ENCODE measurements at regions of chr4 and their contacts with region 1.

Region 1: DNA sequence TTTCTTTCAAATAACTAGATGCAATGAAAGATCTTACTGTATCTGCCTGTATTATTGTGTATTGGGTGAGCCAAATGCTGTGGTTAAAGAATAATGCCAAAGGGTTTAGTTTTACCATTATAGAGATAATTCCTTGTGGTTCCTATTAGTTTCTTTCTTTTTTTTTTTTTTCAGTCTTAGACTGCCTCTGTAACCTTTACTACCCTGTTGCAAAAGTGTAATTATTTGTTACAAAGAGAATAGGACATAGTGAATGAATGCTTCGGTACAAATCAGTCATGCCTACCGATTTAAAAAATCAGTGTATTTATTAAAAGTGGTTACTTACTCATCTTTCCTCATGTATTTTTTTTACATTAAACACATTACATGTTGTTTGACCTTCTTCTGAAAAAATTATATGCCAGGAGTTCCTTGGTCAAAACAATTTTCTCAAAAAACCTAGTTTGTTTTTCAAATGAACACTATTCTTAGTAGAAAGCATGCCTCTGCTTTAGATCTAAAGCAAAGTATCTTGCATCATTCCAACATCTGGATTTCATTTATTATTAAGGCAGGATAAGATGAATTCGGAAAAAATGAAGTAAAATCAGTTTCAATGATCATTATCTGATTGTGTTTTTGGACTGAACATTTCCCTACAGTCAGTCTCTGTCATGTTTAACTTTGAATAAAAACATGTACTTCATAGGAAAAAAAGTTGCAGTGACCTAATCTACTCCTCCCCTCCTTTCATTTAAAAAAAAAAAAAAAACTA is 21.2 kb upstream of the SYNPO2 start:
- DNase-seq: no peak
- ATAC-seq: no peak

Region 2: DNA sequence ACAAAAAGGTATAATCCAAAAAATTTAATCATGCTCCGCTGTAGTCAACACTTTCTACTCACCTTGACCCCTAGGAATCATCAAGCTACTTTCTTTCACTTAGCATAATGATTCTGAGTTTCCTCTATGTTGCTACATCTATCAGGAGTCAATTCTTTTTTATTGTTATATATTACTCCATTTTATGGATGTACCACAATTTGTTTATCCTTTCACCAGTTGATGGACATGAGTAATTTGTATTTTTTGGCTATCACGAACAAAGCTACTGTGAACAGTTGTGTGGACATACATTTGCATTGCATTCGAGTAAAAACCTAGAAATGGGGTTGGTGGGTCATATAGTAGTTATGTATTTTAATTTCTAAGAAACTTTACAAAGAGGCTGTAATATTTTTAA is 617.6 kb before region 1 on chr4:
- intact Hi-C with region 1: no loop called
- DNase-seq: no peak
- ATAC-seq: no peak

Region 3: GRCh38 chr4:118835571-118836300 is 31.8 kb before region 1 on chr4 and contains the start of gene SEC24D:
- intact Hi-C with region 1: loop called (anchors 2 kb)
- DNase-seq: peak; percentile 96
- ATAC-seq: peak; percentile 97
- total RNA-seq, gene SEC24D: 12.2 TPM